Activated CD8-positive, alpha-beta T cell treated with anti-CD3 and anti-CD28 coated beads, Interleukin-2, amount 10 ng/mL, durations not matched to agents 7 days and 5 days (primary cell): ENCODE measurements at regions of chr20 and their contacts with region 1.

Region 1: DNA sequence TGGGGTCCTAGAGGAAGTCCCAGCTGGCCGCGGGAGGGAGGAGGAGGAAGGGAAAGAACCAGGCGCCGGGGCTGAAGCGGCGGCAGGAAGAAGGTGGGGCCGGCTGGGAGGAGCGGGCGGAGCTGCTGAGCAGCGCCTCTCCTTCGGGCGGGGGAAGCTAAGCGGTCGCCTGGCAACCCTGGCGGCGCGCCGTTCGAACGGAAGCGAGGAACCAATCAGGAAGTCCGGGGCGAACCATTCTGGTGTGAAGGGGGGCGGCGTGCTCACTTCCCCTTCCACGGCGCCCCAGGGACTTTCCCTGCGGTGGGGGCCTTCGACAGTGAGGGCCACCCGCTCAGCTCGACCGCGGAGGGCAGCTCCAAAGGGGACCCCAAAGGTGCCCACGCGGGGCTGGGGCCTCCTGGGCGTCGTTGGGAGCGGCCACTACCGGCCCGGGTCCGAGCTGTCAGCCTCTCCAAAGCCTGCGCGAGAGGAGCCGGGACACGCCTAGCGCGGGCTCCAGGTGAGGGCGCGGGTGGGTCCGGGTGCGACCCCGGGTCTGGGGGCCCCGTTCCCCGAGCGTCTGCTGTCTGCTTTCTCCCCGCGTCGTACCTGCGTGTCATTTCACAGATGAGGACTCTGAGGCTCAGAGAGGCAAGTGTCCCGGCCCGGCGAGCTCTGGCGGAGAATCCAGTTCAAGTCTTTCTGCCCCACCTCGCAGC is at the start of gene FAM110A:
- DNase-seq: peak; percentile 97
- ATAC-seq: peak; percentile 92
- H3K4me3 Mint-ChIP-seq: peak within 1 kb of the TSS; percentile 94
- H3K27ac Mint-ChIP-seq: peak within 1 kb of the TSS; percentile 87
- H3K4me1 Mint-ChIP-seq: peaks cover 40% of the 10 kb centered on the region
- H3K27me3 Mint-ChIP-seq: no peaks in the 10 kb centered on the region
- total RNA-seq, gene FAM110A: 35.9 to 36.3 TPM

Region 2: GRCh38 chr20:610130-611046 is 223.2 kb before region 1 on chr20 and contains the start of gene TCF15:
- CTCF ChIA-PET with region 1: no interaction called
- POLR2A ChIA-PET with region 1: no interaction called
- DNase-seq: no peak
- ATAC-seq: peak; percentile 50
- H3K4me3 Mint-ChIP-seq: no peak within 1 kb of the TSS
- H3K27ac Mint-ChIP-seq: no peak within 1 kb of the TSS
- H3K4me1 Mint-ChIP-seq: peaks cover 4% of the 10 kb centered on the region
- H3K27me3 Mint-ChIP-seq: peaks cover 50% of the 10 kb centered on the region
- total RNA-seq, gene TCF15: not detected

Region 3: DNA sequence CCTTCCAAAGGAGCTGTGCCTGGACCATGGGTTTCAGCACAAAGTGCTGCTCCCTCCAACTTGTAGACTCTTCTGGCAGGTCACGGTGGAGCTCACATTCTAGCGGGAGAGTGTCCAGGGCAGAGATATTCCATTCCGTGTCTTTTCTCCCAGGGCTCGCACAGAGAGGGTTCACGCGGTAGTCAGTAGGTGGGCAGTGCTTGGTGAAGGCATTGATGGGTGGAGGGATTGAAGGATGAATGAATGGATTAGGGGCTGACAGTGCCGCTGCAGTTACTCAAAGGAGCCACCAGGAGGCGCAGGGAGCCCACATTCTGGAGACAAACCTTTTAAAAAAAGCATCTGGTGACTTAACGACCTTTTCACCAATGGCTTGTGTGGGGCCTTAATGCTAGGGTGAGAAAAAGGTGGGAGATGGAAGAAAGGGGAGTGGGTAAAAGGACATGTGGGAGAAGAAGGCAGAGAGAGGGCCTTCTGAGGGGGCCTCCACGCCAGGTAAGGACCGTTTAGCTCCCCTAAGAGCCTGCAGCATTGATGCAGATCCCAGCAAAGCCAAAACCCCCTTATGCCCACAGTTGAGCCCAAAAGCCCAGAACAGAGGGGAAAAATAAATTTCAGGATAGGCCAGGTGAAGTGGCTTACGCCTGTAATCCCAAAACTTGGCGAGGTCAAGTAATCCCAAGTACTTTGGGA is 17.5 kb before region 1 on chr20:
- CTCF ChIA-PET with region 1: interaction called, 33 read pairs
- POLR2A ChIA-PET with region 1: interaction called, 3 read pairs
- DNase-seq: peak; percentile 74
- ATAC-seq: peak; percentile 55
- H3K4me3 Mint-ChIP-seq: no peak overlapping the region
- H3K27ac Mint-ChIP-seq: no peak overlapping the region
- H3K4me1 Mint-ChIP-seq: no peaks in the 10 kb centered on the region
- H3K27me3 Mint-ChIP-seq: peaks cover 6% of the 10 kb centered on the region

Region 4: GRCh38 chr20:844473-845225 is 11.0 kb after region 1 on chr20:
- CTCF ChIA-PET with region 1: interaction called, 23 read pairs
- POLR2A ChIA-PET with region 1: interaction called, 46 read pairs
- DNase-seq: peak; percentile 95
- ATAC-seq: peak; percentile 90
- H3K4me3 Mint-ChIP-seq: peak overlapping the region; percentile 87
- H3K27ac Mint-ChIP-seq: peak overlapping the region; percentile 83
- H3K4me1 Mint-ChIP-seq: peaks cover 48% of the 10 kb centered on the region
- H3K27me3 Mint-ChIP-seq: no peaks in the 10 kb centered on the region

Region 5: DNA sequence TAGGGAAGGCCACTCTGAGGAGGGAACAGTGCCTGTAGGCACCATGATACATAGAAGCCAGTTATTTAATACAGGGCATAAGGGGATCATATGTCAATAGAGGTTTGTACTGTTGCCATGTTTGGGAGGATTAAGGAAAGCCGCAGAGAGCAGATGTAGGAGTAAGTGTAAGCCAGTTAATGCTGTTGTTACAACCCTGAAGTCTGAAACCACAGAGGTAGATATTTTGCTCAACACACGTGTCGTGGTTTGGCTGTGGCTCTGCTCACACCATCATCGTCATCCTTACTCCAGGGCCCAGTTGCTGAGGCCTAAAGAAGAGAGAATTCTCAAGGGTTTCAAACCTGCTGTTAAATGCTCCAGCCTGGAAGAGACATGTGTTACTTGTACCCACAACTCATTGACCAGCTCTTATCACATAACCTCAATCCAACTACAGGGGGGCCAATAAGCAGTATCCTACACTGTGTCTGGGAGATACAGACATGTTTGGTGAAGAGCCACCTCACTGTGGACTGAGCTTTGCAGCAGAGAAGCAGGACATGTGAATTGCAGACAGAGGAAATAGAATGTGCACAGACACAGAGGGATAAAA is 253.8 kb after region 1 on chr20:
- CTCF ChIA-PET with region 1: no interaction called
- POLR2A ChIA-PET with region 1: no interaction called
- DNase-seq: no peak
- ATAC-seq: no peak
- H3K4me3 Mint-ChIP-seq: no peak overlapping the region
- H3K27ac Mint-ChIP-seq: no peak overlapping the region
- H3K4me1 Mint-ChIP-seq: peaks cover 22% of the 10 kb centered on the region
- H3K27me3 Mint-ChIP-seq: no peaks in the 10 kb centered on the region